Panc1 (cell line): ENCODE measurements at regions of chr7 and their contacts with region 1.

Region 1: DNA sequence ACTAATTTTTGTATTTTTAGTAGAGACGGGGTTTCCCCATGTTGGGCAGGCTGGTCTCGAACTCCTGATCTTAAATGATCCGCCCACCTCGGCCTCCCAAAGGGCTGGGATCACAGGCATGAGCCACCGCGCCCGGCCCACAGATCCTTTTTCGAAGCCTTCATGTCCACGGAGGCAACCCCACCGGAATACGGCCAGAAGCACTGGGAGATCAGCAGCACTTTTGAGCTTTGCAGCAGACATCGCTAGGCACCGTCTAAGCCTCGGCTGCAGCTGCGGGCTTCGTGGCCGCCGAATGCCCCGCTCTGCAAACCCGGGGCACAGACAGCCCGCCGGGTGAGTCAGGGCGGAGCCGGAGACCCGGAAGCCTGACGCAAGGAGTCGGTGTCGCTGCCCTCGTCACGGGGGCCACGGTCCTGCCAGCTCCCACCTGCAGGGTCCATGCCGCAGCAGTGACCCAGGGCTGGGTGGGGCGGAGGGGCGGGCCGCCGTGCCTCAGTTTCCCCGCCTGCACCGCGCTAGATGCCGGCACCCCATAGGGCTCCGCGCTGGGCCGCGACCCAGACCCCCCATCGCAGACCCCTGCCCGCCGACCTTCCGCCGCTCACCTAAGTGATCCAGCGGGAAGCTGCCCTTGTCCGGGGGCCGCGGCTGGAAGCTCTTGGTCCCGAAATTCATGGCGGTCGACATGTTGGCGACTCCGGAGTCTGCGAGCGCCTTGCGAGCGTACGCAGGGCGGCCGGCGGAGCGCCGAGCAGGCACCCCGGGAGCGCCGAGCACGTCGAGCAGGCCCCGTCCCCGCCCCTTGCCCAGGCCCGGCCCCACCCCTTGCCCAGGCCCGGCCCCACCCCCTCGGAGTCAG is at the start of gene COX19:
- DNase-seq: peak; percentile 36
- ATAC-seq: peak; percentile 95
- H3K4me3 ChIP-seq: peak within 1 kb of the TSS; percentile 86 to 95
- H3K27ac ChIP-seq: peak within 1 kb of the TSS; percentile 76
- H3K4me1 ChIP-seq: peaks cover 16% of the 10 kb centered on the region
- H3K27me3 ChIP-seq: no peaks in the 10 kb centered on the region
- CTCF ChIP-seq: no peak
- total RNA-seq, gene COX19: 14.4 TPM

Region 2: DNA sequence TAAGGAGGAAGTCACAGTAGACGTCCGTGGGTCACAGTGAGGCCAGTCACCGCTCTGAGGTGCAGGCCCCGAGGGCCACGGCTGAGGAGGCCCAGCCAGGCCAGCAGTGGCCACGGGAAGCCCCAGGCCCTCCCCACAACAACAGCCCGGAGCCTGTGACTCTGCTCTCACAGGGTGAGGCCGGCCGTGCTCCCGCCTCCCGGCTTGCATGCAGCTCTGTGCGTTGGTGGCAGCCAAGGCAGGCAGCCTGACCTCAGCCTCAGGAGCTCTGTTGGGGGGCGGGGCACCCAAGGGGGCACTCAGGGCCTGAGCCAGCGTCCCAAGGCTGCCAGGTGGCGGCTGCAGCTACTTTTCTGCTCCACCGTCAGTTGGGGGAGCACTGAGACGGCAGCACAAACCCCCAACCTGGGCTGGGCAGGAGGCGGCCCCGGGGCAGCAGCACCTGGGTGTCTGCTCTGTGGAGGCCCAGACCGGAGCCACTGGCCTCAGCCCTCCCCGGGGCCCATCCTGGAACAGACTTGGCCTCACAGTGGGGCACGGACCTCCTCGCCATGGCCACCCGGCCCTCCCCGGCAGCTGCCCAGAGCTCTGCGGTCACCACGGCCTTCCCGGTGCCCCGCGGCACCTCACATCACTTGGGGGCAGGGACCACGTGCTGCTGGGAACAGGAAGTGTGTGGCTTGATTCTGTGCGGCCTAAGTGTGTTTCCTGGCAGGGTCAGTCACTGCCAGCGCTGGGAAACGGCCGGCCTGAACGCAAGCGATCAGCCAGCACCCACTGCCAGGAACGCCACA is 21.2 kb after region 1 on chr7:
- CTCF ChIA-PET with region 1: no interaction called
- POLR2A ChIA-PET with region 1: no interaction called
- in situ Hi-C with region 1: no loop called
- intact Hi-C with region 1: no loop called
- DNase-seq: no peak
- ATAC-seq: no peak
- H3K4me3 ChIP-seq: no peak overlapping the region
- H3K27ac ChIP-seq: no peak overlapping the region
- H3K4me1 ChIP-seq: peaks cover 25% of the 10 kb centered on the region
- H3K27me3 ChIP-seq: no peaks in the 10 kb centered on the region
- CTCF ChIP-seq: no peak

Region 3: DNA sequence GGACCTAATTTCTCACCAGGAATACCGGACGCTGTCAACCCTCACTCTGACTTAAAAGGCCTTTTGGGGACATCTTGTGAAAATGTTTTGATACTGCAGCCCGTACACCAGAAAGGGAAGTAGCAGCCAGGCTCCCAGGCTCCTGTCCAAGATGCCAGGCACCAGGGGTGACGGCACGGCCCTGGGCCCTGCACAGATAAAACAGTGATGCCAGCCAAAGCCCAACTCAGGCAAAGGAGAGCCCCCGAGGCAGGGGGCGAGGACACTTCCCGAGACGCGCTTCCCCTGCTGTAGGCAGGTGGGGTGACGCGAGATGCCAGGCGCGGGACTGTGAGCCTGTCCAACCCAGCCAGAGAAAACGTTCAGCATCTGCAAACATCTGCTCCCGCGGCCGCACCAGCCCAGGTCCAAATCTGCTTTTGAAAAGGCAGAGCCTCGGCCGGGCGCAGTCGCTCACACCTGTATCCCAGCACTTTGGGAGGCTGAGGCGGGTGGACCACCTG is 169.3 kb after region 1 on chr7:
- CTCF ChIA-PET with region 1: no interaction called
- POLR2A ChIA-PET with region 1: no interaction called
- in situ Hi-C with region 1: loop called (anchors 25 kb)
- intact Hi-C with region 1: no loop called
- DNase-seq: no peak
- ATAC-seq: peak; percentile 89
- H3K4me3 ChIP-seq: no peak overlapping the region
- H3K27ac ChIP-seq: no peak overlapping the region
- H3K4me1 ChIP-seq: no peaks in the 10 kb centered on the region; the same call in 1 of the 2 replicates
- H3K27me3 ChIP-seq: no peaks in the 10 kb centered on the region
- CTCF ChIP-seq: no peak; the same call in 1 of the 2 replicates